Panc1 (cell line): ENCODE measurements at regions of chrX and their contacts with region 1.

Region 1: GRCh38 chrX:81564851-81565250 is 362.9 kb downstream of the SH3BGRL start:
- DNase-seq: no peak
- ATAC-seq: no peak
- H3K4me3 ChIP-seq: no peak overlapping the region
- H3K27ac ChIP-seq: no peak overlapping the region
- H3K4me1 ChIP-seq: no peaks in the 10 kb centered on the region
- H3K27me3 ChIP-seq: no peaks in the 10 kb centered on the region
- CTCF ChIP-seq: no peak

Region 2: GRCh38 chrX:80237072-80237471 is 1327.8 kb before region 1 on chrX:
- CTCF ChIA-PET with region 1: no interaction called
- POLR2A ChIA-PET with region 1: no interaction called
- in situ Hi-C with region 1: no loop called
- intact Hi-C with region 1: loop called (anchors 5 kb)
- DNase-seq: no peak
- ATAC-seq: no peak
- H3K4me3 ChIP-seq: no peak overlapping the region
- H3K27ac ChIP-seq: no peak overlapping the region
- H3K4me1 ChIP-seq: no peaks in the 10 kb centered on the region
- H3K27me3 ChIP-seq: no peaks in the 10 kb centered on the region
- CTCF ChIP-seq: peak; percentile 11; the same call in 1 of the 2 replicates

Region 3: DNA sequence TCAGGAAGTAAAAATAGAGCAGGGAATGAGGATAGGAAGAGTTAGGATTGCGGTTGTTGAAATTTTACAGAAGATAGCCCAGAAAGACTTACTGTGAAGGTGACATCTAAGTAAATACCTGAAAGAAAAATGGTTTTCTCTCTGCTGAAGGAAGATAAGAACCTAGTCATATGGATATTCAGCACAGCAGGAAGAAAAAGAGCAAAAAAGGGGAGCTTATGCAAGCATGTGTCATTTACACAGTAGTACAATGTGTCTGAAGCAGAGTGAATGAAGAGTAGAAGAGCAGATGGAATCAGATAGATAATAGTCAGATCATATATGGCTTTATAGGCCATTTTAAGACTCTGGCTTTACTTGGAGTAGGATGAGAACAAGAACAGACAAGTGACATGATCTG is 1271.5 kb before region 1 on chrX:
- CTCF ChIA-PET with region 1: no interaction called
- POLR2A ChIA-PET with region 1: no interaction called
- in situ Hi-C with region 1: no loop called
- intact Hi-C with region 1: no loop called
- DNase-seq: no peak
- ATAC-seq: no peak
- H3K4me3 ChIP-seq: no peak overlapping the region
- H3K27ac ChIP-seq: no peak overlapping the region
- H3K4me1 ChIP-seq: no peaks in the 10 kb centered on the region
- H3K27me3 ChIP-seq: no peaks in the 10 kb centered on the region
- CTCF ChIP-seq: no peak

Region 4: DNA sequence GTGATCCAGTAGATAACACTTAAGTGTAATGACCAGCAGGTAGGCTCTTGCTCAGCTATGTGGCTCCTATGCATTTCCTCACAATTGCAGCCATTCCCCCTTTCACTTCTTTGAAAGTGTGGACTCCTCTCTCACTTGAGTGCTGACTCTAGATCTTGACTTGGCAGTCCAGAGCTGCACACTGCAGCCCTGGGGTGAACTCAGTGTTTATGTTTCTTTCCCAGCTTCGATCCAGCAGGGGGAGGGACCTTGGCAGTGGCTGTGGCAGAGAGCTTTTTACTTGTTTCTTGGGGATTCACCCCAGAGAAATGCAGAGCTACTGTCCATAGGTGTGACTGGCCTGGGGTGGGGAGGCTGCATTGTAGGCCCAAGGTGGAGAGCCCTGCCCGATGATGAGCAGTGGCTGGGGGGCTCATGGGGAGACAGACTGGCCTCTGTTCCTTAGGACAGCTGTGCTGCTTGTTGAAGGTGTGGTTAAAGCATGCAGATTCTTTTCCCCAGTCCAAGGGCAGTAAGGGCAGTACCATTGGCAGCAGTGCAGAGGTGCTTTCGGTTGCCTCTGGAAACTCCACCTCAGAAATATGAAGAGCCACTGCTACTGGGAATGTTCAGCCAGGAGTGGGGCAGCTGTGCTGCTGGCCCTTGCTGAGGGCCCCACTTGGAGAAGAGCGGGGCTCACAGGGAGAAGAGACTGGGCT is 228.2 kb before region 1 on chrX:
- CTCF ChIA-PET with region 1: no interaction called
- POLR2A ChIA-PET with region 1: no interaction called
- in situ Hi-C with region 1: no loop called
- intact Hi-C with region 1: no loop called
- DNase-seq: no peak
- ATAC-seq: no peak
- H3K4me3 ChIP-seq: no peak overlapping the region
- H3K27ac ChIP-seq: no peak overlapping the region
- H3K4me1 ChIP-seq: no peaks in the 10 kb centered on the region
- H3K27me3 ChIP-seq: no peaks in the 10 kb centered on the region
- CTCF ChIP-seq: no peak

Region 5: DNA sequence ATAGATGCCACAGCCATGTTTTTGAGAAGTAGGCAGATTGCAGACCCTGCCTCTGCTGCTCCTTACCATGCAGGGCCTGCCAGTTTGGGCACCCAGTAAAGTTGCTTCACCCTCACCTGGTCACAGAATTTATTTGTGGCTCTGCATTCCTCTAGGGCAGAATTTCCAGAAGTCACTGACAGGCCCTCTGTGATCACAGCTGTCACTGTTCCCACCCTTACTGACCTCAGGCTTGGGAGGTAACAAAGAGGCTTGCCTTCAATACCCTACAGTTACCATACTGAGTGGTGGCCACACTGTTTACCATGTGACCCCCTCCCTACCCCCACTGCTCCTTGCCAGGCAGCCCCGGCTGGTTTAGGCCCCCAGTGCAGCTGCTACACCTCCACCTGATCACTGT is 12.2 kb after region 1 on chrX:
- CTCF ChIA-PET with region 1: no interaction called
- POLR2A ChIA-PET with region 1: no interaction called
- in situ Hi-C with region 1: no loop called
- intact Hi-C with region 1: no loop called
- DNase-seq: no peak
- ATAC-seq: no peak
- H3K4me3 ChIP-seq: no peak overlapping the region
- H3K27ac ChIP-seq: no peak overlapping the region
- H3K4me1 ChIP-seq: no peaks in the 10 kb centered on the region
- H3K27me3 ChIP-seq: no peaks in the 10 kb centered on the region
- CTCF ChIP-seq: no peak